Mammary epithelial cell (primary cell): ENCODE measurements at regions of chr15 and their contacts with region 1.

Region 1: DNA sequence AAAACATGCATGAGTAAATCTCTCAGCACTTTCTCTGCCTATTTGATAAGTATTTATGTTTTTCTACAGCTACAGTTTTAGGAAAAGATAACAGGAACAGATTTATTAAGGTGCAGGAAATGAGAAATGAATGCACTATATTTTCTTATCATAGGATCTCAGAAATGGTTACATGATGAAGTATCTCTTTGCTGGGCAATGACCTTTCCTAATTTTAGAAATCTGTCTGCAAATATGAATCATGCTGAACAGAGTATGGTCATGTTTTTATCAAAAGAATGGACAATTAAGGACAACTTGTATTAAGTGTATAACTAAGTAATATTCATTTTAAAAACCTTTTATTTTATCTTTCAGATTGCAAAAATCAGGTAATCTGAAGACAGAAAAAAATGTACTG is 53.8 kb upstream of the SPPL2A start:
- DNase-seq: no peak
- H3K4me3 ChIP-seq: no peak overlapping the region
- H3K27ac ChIP-seq: no peak overlapping the region
- H3K4me1 ChIP-seq: peaks cover 8% of the 10 kb centered on the region
- H3K27me3 ChIP-seq: no peaks in the 10 kb centered on the region
- CTCF ChIP-seq: no peak

Region 2: GRCh38 chr15:50726315-50726714 is 93.0 kb before region 1 on chr15:
- CTCF ChIA-PET with region 1: no interaction called
- dilution Hi-C with region 1: loop called (anchors 5 kb)
- in situ Hi-C with region 1: no loop called
- intact Hi-C with region 1: no loop called
- DNase-seq: no peak
- H3K4me3 ChIP-seq: no peak overlapping the region
- H3K27ac ChIP-seq: no peak overlapping the region
- H3K4me1 ChIP-seq: no peaks in the 10 kb centered on the region
- H3K27me3 ChIP-seq: no peaks in the 10 kb centered on the region
- CTCF ChIP-seq: no peak